Aorta (tissue), 5 donors: ENCODE measurements at regions of chr21 and their contacts with region 1.

Region 1: DNA sequence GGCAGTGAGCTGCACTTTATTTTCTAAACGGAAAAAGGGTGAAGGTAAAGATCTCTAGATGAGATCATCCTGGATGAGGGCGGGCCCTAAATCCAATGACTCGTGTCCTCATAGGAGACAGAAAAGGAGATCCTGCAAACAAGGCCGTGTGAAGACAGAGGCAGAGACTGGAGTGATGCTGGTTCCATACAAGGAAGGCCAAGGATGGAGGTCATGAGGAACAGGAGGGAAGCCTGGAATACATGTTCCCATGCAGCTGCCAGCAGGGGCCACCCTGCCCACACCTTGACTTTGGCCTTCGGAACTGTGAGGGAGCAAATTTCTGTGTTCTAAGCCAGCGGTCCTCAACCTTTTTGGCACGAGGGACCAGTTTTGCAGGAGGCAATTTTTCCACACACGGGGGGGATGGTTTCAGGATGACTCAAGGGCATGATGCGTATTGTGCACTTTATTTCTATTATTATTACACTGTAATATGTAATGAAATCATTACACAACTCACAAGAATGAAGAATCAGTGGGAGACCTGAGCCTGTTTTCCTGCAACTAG is 94.3 kb downstream of the PSMG1 start:
- DNase-seq: peak; percentile 84 to 86
- ATAC-seq: peak; percentile 37
- H3K4me3 ChIP-seq: no peak overlapping the region
- H3K27ac ChIP-seq: peak overlapping the region; percentile 93 to 95
- H3K4me1 ChIP-seq: peaks cover 4 to 6% of the 10 kb centered on the region in 2 donors
- H3K27me3 ChIP-seq: no peaks in the 10 kb centered on the region

Region 2: DNA sequence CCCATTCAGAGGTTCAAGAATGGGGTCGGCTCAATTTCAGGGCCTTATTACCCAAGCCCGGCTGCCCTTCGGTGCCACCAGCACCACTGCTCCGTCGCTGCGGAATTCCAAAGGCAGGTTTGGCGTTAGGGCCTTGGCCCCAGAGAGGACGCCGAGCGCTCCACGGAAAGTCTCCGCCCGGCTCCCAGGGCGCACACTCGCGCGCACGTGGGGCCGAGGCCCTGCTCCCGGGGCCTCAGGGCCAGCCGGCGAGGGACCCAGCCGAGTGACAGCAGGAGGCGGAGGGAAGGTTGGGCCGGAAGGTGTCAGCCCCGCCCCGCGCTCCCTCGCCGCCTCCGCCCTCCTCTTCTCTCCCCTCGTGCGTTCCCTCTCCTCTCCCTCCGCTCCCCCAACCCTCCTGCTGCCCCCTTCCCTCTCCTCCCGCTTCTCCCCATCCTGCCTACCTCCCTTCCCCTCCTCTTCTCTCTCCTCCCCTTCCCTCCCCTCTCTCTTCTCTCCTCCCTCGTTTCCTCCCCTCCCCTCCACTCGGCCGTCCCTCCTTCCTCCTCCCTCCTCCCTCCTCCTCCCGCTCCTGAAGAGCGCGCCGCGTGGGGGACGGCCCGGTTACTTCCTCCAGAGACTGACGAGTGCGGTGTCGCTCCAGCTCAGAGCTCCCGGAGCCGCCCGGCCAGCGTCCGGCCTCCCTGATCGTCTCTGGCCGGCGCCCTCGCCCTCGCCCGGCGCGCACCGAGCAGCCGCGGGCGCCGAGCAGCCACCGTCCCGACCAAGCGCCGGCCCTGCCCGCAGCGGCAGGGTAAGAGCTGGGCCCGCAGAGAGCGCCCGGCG is 283.4 kb before region 1 on chr21 and contains the start of gene ETS2:
- intact Hi-C with region 1: loop called in 1 of 2 experiments (anchors 1 kb)
- DNase-seq: peak; percentile 96 to 97
- ATAC-seq: peak; percentile 93
- H3K4me3 ChIP-seq: peak within 1 kb of the TSS; percentile 96 to 99
- H3K27ac ChIP-seq: peak within 1 kb of the TSS; percentile 93
- H3K4me1 ChIP-seq: peaks cover 2 to 9% of the 10 kb centered on the region in 2 donors
- H3K27me3 ChIP-seq: no peaks in the 10 kb centered on the region
- total RNA-seq, gene ETS2: 145 to 232 TPM

Region 3: DNA sequence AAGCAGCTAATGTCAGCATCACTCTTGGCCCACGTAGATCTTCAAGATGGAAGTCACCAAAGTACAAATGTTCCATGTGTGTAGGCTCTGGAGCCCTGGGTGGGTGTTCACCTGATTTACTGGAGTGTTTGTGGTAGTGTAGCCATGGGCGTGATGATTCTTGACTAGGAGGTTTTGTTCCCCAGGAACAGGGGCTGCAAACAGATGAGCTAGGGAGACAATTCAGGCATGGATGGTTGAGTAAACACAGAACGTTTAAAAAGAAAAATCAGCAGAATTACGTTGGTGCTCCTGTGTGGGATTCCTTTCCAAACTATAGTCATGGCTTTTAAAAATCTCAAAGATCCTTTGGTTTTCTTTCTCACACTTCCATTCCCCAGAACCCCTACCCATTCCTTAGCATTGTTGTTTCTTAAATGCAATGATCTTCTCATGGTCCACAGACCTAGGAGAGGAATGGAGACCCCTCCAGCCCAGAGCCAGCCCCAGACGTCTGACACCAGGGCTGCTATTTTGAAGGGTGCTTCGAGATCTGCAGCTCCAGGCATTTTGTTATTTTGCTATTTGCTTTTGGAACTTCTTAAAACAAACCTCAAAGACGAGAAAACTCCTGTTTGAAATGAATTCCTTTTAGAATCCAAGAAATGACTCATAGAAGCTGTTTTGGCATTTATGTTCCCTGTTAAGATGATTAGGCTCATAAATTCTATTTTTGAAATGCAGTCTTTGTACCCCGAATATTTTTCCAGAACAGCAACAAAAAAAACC is 168.1 kb before region 1 on chr21:
- intact Hi-C with region 1: loop called (anchors 5 kb)
- DNase-seq: no peak
- ATAC-seq: peak; percentile 10
- H3K4me3 ChIP-seq: no peak overlapping the region
- H3K27ac ChIP-seq: peak overlapping the region; percentile 46 to 49
- H3K4me1 ChIP-seq: peaks cover 0 to 9% of the 10 kb centered on the region in 2 donors
- H3K27me3 ChIP-seq: no peaks in the 10 kb centered on the region

Region 4: GRCh38 chr21:39004634-39005501 is 84.0 kb before region 1 on chr21:
- intact Hi-C with region 1: loop called in 1 of 2 experiments (anchors 5 kb)
- DNase-seq: peak in 1 of 2 donors; percentile 90
- ATAC-seq: peak; percentile 60
- H3K4me3 ChIP-seq: no peak overlapping the region
- H3K27ac ChIP-seq: peak overlapping the region; percentile 61 to 92
- H3K4me1 ChIP-seq: peaks cover 0 to 11% of the 10 kb centered on the region in 2 donors
- H3K27me3 ChIP-seq: no peaks in the 10 kb centered on the region

Region 5: DNA sequence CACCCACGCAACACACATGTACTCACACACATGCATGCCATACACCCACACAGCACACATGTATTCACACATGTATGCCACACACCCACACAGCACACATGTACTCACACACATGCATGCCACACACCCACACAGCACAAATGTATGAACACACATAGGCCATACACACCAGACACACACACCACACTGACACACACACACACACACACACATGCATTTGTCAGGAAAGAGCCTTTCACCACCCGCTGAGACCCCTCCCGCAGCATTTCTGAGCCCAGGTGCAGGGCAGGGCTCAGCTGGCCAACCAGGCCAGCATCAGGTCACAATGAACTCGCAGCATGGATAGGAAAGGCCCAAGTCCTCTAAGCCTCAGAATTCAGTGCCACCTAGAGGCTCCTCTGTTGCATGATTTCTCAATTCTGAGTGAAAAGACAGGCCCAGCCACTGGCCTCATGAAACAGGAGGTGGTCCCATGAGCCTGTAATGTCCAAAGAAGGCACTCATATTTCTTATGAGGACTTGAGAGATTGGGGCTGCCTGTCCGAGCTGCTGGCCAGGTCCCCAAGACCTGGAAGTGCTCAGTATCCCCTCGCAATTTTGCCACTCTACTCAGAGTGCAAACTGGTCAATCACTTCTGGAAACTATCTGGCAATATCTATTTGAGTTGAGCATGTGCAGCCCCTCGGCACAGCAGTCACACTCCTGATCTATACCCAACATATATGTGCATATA is 37.0 kb after region 1 on chr21:
- intact Hi-C with region 1: loop called in 1 of 2 experiments (anchors 2 kb)
- DNase-seq: no peak
- ATAC-seq: peak; percentile 88
- H3K4me3 ChIP-seq: no peak overlapping the region
- H3K27ac ChIP-seq: no peak overlapping the region
- H3K4me1 ChIP-seq: no peaks in the 10 kb centered on the region
- H3K27me3 ChIP-seq: no peaks in the 10 kb centered on the region